ENCODE measurements at regions of chr18 and their contacts with region 1.

Region 1: DNA sequence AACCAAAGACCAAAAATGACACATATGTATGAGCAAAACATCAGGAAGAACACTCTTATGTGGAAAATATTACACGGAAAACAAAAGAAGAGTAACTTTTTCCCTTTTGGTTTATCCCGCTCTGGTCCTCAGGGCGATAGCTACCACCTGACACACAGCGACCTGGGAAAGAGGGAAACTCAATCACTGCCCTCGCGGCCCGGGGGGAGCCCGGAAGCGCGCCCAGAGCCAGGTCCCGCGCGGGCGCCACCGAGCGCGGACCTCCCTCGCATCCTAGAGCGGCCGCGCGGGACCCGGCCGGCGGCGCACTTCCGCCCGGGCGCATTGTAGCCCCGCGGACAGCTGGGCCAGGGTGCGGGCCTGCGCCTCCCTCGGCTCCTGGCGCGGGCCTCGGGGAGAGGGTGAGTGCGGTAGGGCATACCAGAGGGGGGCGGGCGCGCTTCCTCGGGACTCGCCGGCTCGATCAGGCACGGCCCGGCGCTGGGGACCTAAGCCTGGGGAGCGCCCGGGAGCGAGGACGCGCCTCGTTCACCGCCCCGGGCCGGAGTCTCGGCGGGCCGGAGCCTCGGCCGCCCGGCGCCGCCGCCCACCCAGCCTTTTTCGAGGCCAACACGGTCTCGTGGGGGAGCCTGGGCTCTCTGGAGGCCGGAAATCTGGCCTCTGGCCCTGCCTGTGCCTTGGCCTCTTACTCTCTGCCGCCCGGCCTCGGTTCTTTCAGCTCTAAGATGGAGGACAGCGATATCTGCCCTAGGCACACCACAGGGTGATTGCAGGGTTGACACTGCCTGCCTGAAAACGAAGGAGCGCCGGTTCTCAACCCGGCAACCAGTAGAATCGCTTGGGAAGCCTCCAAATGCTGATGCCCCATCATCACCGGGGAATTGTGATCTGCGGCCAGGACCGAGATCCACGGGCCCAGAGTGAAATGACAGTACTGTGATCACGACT is at the start of gene ELAC1:
- DNase-seq: peak; percentile 76
- ATAC-seq: peak; percentile 91
- H3K4me3 Mint-ChIP-seq: peak within 1 kb of the TSS; percentile 76
- H3K27ac Mint-ChIP-seq: peak within 1 kb of the TSS; percentile 94
- H3K4me1 Mint-ChIP-seq: peaks cover 30% of the 10 kb centered on the region
- H3K27me3 Mint-ChIP-seq: no peaks in the 10 kb centered on the region
- total RNA-seq, gene ELAC1: 4.7 to 5.6 TPM

Region 2: GRCh38 chr18:50902797-50903196 is 65.2 kb before region 1 on chr18:
- CTCF ChIA-PET with region 1: no interaction called
- POLR2A ChIA-PET with region 1: no interaction called
- intact Hi-C with region 1: loop called in 1 of 2 experiments (anchors 2 kb)
- DNase-seq: no peak
- ATAC-seq: no peak
- H3K4me3 Mint-ChIP-seq: no peak overlapping the region
- H3K27ac Mint-ChIP-seq: no peak overlapping the region
- H3K4me1 Mint-ChIP-seq: peaks cover 37% of the 10 kb centered on the region
- H3K27me3 Mint-ChIP-seq: no peaks in the 10 kb centered on the region

Region 3: GRCh38 chr18:51016903-51017879 is 49.2 kb after region 1 on chr18:
- CTCF ChIA-PET with region 1: no interaction called
- POLR2A ChIA-PET with region 1: no interaction called
- intact Hi-C with region 1: no loop called
- DNase-seq: no peak
- ATAC-seq: no peak
- H3K4me3 Mint-ChIP-seq: no peak overlapping the region
- H3K27ac Mint-ChIP-seq: no peak overlapping the region
- H3K4me1 Mint-ChIP-seq: no peaks in the 10 kb centered on the region
- H3K27me3 Mint-ChIP-seq: no peaks in the 10 kb centered on the region

Region 4: DNA sequence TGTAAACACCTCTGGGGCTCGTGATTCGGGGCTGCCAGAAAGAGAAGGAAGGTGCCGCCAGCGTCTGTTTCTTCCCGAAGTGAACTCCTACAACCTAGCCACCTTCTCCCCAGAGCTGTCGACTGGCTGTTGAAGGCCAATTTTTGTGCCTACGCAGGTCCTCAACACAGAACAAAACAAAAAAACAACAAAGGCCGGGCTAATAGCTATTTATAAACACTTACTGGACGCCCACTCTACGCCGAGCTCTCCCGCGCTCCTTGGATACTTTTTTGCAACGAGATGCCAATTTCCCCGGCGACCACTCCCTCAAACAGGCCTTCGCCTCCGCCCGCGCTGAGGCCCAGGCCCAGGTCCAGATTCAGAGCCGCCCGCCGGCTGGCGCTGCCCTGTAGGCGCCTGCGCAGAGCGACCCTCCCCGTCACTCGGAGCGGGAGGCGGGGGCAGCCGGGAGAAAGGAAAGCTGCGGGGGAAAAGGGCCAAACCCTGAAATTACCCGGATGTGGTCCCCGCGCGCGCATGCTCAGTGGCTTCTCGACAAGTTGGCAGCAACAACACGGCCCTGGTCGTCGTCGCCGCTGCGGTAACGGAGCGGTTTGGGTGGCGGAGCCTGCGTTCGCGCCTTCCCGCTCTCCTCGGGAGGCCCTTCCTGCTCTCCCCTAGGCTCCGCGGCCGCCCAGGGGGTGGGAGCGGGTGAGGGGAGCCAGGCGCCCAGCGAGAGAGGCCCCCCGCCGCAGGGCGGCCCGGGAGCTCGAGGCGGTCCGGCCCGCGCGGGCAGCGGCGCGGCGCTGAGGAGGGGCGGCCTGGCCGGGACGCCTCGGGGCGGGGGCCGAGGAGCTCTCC is 61.9 kb after region 1 on chr18 and contains the start of gene SMAD4:
- CTCF ChIA-PET with region 1: no interaction called
- POLR2A ChIA-PET with region 1: interaction called, 3 read pairs
- intact Hi-C with region 1: loop called (anchors 1 to 2 kb)
- DNase-seq: peak; percentile 99
- ATAC-seq: peak; percentile 84
- H3K4me3 Mint-ChIP-seq: peak within 1 kb of the TSS; percentile 85
- H3K27ac Mint-ChIP-seq: peak within 1 kb of the TSS; percentile 94
- H3K4me1 Mint-ChIP-seq: peaks cover 55% of the 10 kb centered on the region
- H3K27me3 Mint-ChIP-seq: no peaks in the 10 kb centered on the region
- total RNA-seq, gene SMAD4: 79.3 to 89.5 TPM